ENCODE measurements at regions of chr16 and their contacts with region 1.

Region 1: GRCh38 chr16:31458844-31459721 is at the start of gene ARMC5:
- DNase-seq: peak; percentile 95
- H3K4me3 Mint-ChIP-seq: peak within 1 kb of the TSS; percentile 93
- H3K27ac Mint-ChIP-seq: peak within 1 kb of the TSS; percentile 95
- H3K4me1 Mint-ChIP-seq: peaks cover 41% of the 10 kb centered on the region
- H3K27me3 Mint-ChIP-seq: no peaks in the 10 kb centered on the region
- total RNA-seq, gene ARMC5: 11.2 and 12.7 TPM in 2 replicates

Region 2: DNA sequence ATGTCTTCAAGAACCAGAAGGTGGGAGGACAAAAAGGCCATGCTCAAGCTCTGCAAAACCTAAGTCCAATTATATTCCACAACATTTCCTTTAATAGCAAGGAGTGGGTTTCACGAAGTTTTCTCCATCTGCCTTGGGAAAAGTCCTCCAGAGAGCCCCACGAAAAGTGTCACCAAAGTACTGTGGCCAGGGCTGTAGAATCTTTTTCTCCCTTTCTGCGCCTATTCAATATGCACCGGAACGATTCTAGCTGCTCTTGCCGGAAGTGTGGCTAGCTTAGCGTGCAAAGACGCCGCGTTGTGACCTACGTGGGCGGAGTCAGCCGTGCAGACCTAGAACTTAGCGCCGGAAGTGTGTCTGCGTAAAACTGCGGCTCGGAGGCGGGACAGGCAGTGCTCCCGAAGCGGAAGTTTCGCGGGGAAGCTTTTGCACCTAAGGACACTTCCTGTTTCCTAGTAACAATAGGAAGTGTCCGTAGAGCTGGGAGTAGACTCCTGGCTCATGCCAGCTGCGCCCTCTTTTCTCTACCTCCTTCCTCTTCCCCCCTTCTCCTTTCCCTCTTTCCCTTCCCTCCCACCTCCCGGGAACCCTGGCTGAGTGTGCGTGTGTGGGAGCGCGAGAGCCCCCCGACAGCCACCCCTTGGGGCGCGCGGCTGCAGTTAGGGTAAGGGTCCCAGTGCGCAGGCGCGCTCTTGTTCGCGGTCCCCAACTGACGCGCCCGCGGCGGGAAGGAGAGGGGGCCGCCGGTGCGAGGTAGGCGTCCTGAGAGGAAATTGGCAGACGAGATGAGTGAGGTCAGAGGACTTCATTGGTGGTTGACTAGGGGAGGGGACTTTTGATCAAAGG is 384.9 kb before region 1 on chr16 and contains the starts of genes ZNF646 and ZNF668:
- intact Hi-C with region 1: loop called (anchors 1 kb)
- DNase-seq: peak; percentile 98
- H3K4me3 Mint-ChIP-seq: peak within 1 kb of the TSS; percentile 99
- H3K27ac Mint-ChIP-seq: peak within 1 kb of the TSS; percentile 96
- H3K4me1 Mint-ChIP-seq: peaks cover 35% of the 10 kb centered on the region
- H3K27me3 Mint-ChIP-seq: no peaks in the 10 kb centered on the region
- total RNA-seq, gene ZNF646: 25.3 and 26.1 TPM in 2 replicates
- total RNA-seq, gene ZNF668: 14.9 and 15.1 TPM in 2 replicates

Region 3: DNA sequence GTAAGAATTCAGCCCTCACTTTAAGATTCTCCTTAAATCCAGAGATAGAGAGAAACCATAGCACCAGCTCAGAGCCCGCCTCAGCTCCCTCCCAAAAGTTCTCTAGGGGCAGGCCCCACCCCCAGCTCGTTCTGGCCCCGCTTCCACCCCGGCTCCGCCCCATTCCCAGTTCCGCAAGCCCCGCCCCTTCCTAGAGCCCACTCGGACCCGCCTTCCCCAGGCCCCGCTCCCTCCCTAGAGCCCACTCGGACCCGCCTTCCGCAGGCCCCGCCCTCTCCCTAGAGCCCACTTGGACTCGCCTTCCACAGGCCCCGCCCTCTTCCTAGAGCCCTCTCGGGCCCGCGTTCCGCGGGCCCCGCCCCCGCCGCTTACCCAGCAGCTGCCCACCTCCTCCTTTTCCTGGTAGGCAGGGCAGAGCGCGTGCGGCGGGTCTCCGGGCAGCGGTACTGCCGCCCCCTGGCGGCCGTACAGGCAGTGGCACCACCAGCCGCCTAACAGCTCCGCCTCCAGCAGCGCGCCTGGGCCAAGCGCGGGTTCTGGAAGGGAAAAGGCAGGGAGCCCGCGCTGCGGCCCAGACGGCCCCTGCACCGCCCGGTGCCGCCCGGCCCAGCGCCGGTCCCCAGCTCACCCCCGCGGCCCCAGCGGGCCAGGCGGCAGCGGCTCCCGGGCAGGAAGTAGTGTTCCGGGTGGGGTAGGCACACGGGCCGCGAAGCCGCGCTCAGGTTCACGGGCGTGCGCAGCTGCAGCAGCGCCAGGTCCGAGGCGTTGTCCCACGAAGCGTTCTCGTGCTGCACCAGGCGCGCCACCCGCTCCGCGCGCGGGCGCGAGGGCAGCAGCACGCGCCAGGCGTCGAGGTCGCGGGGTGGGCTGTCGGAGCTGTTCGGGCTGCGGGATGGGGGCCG is 316.7 kb before region 1 on chr16:
- intact Hi-C with region 1: loop called (anchors 1 kb)
- DNase-seq: peak; percentile 98
- H3K4me3 Mint-ChIP-seq: peak overlapping the region; percentile 78
- H3K27ac Mint-ChIP-seq: peak overlapping the region; percentile 88
- H3K4me1 Mint-ChIP-seq: peaks cover 12% of the 10 kb centered on the region
- H3K27me3 Mint-ChIP-seq: peaks cover 13% of the 10 kb centered on the region

Region 4: DNA sequence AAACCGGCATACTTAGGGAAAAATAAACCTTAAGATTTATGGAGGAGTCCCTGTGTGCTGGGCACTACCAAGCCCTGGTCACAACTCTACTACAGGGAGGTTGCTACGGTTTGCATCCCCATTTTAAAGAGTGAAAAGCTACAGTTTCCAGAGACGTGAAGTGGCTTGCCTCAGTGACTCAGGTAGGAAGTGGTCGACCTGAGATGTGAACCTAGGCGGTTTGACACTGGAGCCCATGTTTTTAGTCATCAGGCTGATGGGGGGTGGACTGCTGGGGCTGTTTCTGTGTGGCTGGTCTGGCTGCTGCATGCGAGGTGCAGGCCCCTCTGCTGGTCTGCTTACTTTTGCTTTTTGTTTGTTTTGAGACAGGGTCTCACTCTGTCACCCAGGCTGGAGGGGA is 37.5 kb before region 1 on chr16:
- intact Hi-C with region 1: loop called (anchors 1 kb)
- DNase-seq: peak; percentile 69
- H3K4me3 Mint-ChIP-seq: peak overlapping the region; percentile 44
- H3K27ac Mint-ChIP-seq: peak overlapping the region; percentile 77
- H3K4me1 Mint-ChIP-seq: peaks cover 62% of the 10 kb centered on the region
- H3K27me3 Mint-ChIP-seq: peaks cover 2% of the 10 kb centered on the region

Region 5: GRCh38 chr16:31472709-31473203 is 13.7 kb after region 1 on chr16:
- intact Hi-C with region 1: loop called (anchors 1 kb)
- DNase-seq: no peak
- H3K4me3 Mint-ChIP-seq: peak overlapping the region; percentile 70
- H3K27ac Mint-ChIP-seq: no peak overlapping the region
- H3K4me1 Mint-ChIP-seq: peaks cover 20% of the 10 kb centered on the region
- H3K27me3 Mint-ChIP-seq: peaks cover 46% of the 10 kb centered on the region

Region 6: DNA sequence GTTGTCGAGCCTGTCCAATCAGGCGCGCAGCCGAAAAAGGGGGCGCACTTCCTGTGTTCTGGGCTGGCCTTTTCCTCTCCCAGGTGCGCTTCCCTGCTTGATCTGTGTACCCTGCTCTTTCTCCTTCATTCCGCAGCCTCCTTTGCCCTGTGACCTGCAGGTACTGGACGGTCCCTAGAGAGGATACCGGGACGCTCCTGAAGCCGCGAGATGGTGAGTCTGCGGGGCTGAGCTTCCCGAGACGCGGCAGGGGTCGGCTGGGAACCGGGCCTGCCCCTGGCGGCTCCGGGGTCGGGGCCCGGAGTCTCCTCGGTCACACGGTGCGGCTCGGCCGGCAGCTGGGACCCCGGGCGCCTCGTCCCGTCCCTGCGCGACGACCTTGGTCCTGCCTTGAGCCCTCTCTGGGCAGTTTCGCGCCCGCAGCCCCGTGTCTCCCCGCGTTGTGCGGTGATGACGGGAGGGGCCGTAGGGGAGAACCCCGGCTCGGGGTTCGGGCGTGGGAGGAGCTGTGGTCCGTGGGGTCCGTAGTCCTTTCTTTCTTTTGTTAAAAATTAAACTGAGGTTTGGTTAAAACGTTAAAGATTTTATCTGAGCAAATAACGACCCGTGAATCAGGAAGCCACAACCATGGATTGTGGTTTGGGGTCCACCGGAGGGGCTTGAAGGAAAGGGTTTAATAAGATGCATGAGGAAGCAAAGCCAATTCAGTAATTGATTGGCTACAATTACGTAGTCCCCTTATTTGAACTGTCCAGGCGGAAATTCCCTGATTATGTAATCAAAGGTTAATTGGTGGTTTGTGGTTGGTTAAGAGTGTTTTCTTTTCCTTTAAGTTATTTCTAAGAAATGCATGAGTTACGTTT is 241.7 kb after region 1 on chr16:
- intact Hi-C with region 1: loop called (anchors 1 kb)
- DNase-seq: peak; percentile 72
- H3K4me3 Mint-ChIP-seq: peak overlapping the region; percentile 91
- H3K27ac Mint-ChIP-seq: peak overlapping the region; percentile 89
- H3K4me1 Mint-ChIP-seq: peaks cover 28% of the 10 kb centered on the region
- H3K27me3 Mint-ChIP-seq: no peaks in the 10 kb centered on the region

Region 7: DNA sequence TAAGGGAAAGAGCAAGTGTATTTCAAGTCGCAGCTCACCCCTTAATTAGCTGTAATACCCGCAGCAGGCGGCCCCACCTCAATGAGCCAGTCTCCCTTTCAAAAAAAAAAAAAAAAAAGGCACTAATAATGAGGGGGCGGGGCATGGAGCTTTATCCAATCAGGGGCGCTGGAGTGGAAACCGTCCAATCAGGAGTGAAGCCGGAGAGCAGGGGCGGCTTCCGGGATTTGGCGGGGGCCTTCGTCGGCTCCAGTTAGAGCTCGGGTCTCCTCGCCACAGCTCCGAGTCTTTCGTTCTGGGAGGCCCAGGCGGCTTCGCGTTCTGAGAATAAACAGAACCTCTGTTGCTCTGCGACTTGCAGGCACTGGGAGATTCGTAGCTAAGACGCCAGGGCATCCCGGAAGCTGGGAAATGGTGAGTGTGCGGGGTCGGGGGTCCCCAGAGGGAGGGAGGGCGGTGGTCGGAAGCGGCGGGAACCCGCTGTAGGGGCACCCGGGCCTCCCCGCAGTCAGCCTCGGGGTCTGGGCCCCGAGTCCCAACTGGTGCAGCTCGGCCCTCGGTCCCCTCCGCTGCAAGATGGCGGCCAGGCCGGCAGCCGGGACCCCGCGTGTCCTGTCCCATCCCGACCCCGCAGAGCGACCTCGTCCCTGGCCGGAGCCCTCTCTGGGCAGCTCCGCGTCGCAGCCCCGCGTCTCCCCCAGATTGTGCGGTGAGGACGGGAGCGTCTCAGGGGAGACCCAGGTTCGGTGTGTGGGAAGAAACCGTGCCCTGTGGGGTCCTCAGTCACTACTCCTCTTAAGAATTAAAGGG is 414.7 kb after region 1 on chr16 and contains the start of gene ZNF267:
- intact Hi-C with region 1: loop called (anchors 1 kb)
- DNase-seq: peak; percentile 90
- H3K4me3 Mint-ChIP-seq: peak within 1 kb of the TSS; percentile 96
- H3K27ac Mint-ChIP-seq: peak within 1 kb of the TSS; percentile 94
- H3K4me1 Mint-ChIP-seq: peaks cover 84% of the 10 kb centered on the region
- H3K27me3 Mint-ChIP-seq: no peaks in the 10 kb centered on the region
- total RNA-seq, gene ZNF267: 93.9 and 98.9 TPM in 2 replicates